ENCODE measurements at regions of chr6 and their contacts with region 1.

Region 1: GRCh38 chr6:56593801-56594318 is 48.8 kb downstream of the DST start:
- DNase-seq: no peak
- ATAC-seq: peak; percentile 50
- H3K4me3 ChIP-seq: no peak overlapping the region
- H3K4me1 ChIP-seq: no peaks in the 10 kb centered on the region
- CTCF ChIP-seq: no peak

Region 2: DNA sequence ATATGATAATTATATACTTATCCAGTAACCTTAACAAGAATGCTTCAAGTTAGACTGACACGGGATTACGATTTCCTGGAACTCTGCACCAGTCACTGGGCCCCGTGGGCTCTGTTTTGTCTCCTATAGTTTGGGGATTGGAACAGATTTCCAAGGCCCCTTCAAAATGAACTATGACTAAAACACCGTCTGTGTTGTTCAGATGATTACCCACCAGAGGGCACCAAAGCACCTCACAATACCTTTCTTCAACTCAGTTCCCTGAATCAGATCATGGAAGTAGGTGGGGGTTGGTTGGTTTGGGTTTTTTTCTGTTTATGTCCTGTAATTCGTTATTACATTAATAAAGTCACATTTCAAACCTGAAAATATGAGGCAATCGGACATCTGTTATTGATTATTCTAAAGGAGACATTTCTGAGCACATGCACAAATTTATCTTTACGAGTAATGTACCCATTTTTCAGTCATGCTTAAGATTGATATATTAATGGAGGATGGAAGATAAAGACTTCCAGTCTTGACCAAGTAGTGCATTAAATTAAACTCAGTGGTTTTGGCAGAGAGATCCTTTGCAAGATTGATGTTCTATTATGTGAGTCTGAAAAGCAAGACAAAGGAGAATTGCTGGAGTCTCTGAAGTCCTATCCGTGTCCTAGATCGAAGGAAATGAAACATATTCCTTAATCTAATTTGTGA is 234.5 kb before region 1 on chr6:
- intact Hi-C with region 1: loop called (anchors 2 to 5 kb)
- DNase-seq: peak in 1 of 3 donors; percentile 80
- ATAC-seq: peak; percentile 82
- H3K4me3 ChIP-seq: no peak overlapping the region
- H3K4me1 ChIP-seq: no peaks in the 10 kb centered on the region
- CTCF ChIP-seq: peak; percentile 62

Region 3: DNA sequence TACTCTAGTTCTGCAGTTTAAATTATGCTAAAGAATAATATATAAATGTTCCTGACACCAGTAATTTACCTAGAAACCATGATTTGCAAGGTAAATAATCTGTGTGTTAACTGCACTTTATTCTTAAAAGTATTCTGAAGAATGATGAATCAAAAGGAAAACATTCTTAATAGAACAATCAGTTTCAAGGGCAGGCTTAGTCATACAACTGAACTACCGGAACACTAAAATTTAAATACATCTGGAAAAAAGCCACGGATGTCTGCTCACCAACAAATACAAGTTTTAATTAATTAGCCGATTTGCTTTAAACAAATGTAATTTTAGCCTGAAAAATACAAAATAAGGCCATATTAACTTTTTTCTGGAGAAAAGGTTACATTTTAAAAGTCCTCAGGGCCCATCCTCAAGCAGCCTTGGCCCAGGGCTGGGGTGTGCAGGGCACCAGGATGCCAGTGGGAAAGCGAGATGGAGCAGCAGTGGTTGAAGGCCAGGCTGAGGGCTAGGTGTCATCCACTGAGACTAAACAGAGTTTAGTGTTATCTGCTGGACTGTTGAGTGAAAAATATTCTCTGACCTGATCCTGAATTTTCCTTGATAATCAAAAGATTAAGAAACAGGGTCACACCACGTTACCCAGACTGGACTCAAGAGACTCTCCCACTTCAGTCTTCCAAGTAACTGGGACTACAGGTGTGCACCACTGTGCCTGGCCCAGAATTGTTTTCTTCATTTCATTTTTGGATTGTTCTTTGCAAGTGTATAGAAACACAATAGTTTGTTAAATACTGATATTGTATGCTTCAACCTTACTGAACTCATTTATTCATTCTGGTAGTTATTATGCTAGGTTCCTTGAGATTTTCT is 137.0 kb after region 1 on chr6:
- intact Hi-C with region 1: no loop called
- DNase-seq: no peak
- ATAC-seq: no peak
- H3K4me3 ChIP-seq: no peak overlapping the region
- H3K4me1 ChIP-seq: peaks cover 31% of the 10 kb centered on the region
- CTCF ChIP-seq: no peak